ENCODE measurements at regions of chr7 and their contacts with region 1.

Region 1: GRCh38 chr7:71155236-71155635 is 23.3 kb downstream of the GALNT17 start:
- DNase-seq: no peak
- H3K4me3 ChIP-seq: no peak overlapping the region
- H3K27ac ChIP-seq: no peak overlapping the region
- H3K4me1 ChIP-seq: no peaks in the 10 kb centered on the region
- H3K27me3 ChIP-seq: no peaks in the 10 kb centered on the region
- CTCF ChIP-seq: no peak
- POLR2A ChIP-seq: no peak

Region 2: GRCh38 chr7:71042564-71042963 is 112.7 kb before region 1 on chr7:
- intact Hi-C with region 1: loop called (anchors 5 kb)
- DNase-seq: no peak
- H3K4me3 ChIP-seq: no peak overlapping the region
- H3K27ac ChIP-seq: no peak overlapping the region
- H3K4me1 ChIP-seq: no peaks in the 10 kb centered on the region
- H3K27me3 ChIP-seq: no peaks in the 10 kb centered on the region
- CTCF ChIP-seq: no peak
- POLR2A ChIP-seq: no peak

Region 3: DNA sequence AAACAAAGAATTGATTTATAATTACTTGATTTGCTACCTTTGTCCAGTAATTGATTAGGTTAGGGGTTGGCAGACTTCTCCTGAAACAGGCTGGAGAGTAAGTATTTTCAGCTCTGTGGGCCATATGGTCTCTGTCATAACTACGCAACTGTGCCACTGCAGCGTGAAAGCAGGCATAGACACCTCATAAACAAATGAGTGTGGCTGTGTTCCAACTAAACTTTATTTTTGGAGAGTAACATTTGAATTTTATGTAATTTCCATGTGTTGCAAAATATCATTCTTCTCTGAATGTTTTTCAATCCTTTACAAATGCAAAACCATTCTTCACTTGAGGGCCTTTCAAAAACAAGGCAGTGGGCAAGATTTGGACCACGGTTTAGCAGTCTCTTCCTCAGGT is 53.6 kb after region 1 on chr7:
- intact Hi-C with region 1: no loop called
- DNase-seq: no peak
- H3K4me3 ChIP-seq: no peak overlapping the region
- H3K27ac ChIP-seq: no peak overlapping the region
- H3K4me1 ChIP-seq: no peaks in the 10 kb centered on the region
- H3K27me3 ChIP-seq: no peaks in the 10 kb centered on the region
- CTCF ChIP-seq: no peak
- POLR2A ChIP-seq: no peak

Measured in vagina (tissue), 2 donors.